SK-N-SH (cell line): ENCODE measurements at regions of chr15 and their contacts with region 1.

Region 1: DNA sequence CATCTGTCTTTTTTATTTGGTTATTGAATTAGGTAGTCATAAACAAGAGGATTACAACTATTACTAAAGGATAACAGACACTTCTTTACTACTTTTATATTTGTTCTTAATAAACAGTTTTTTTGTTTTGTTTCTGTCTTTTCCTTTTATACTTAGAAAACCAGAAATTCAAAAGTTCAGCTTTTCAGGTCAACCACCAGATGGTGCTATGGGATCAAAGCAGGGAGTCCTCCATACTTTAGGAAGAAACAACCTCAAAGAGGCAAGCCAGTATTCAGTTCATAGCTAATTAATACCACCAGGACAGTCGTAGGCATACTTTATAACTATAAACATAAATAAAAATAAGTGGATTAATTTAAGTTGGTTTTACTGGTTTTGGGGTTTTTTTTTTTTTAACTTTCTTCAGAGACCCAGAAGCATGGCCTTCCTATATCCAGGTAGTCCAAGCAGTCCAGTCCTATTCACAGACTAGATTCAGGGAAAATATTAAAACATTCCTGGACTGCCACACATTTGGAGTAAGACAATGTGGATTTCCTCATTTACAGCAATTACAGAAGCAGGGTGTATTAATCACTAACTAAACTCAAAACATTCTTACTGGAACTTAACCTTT is 16.0 kb upstream of the EID1 start:
- DNase-seq: peak; percentile 58
- H3K4me3 ChIP-seq: no peak overlapping the region
- H3K27ac ChIP-seq: no peak overlapping the region
- H3K4me1 ChIP-seq: peaks cover 1 to 31% of the 10 kb centered on the region in 2 experiments; a peak in 3 of 4 replicates
- H3K27me3 ChIP-seq: no peaks in the 10 kb centered on the region
- CTCF ChIP-seq: peak; percentile 98
- EP300 ChIP-seq: no peak
- RAD21 ChIP-seq: peak; percentile 99

Region 2: GRCh38 chr15:48358229-48358641 is 503.7 kb before region 1 on chr15:
- CTCF ChIA-PET with region 1: interaction called, 29 read pairs
- POLR2A ChIA-PET with region 1: no interaction called
- DNase-seq: peak; percentile 32
- H3K4me3 ChIP-seq: no peak overlapping the region
- H3K27ac ChIP-seq: peak overlapping the region; percentile 31 to 75; a peak in 3 of 4 replicates
- H3K4me1 ChIP-seq: peaks cover 0 to 14% of the 10 kb centered on the region in 2 experiments; a peak in 2 of 4 replicates
- H3K27me3 ChIP-seq: no peaks in the 10 kb centered on the region
- CTCF ChIP-seq: peak; percentile 82
- EP300 ChIP-seq: no peak
- RAD21 ChIP-seq: peak; percentile 87

Region 3: GRCh38 chr15:48682949-48683651 is 178.8 kb before region 1 on chr15:
- CTCF ChIA-PET with region 1: no interaction called
- POLR2A ChIA-PET with region 1: no interaction called
- DNase-seq: no peak
- H3K4me3 ChIP-seq: no peak overlapping the region
- H3K27ac ChIP-seq: no peak overlapping the region
- H3K4me1 ChIP-seq: peaks cover 0 to 9% of the 10 kb centered on the region in 2 experiments; a peak in 3 of 4 replicates
- H3K27me3 ChIP-seq: no peaks in the 10 kb centered on the region
- CTCF ChIP-seq: no peak
- EP300 ChIP-seq: no peak
- RAD21 ChIP-seq: no peak

Region 4: GRCh38 chr15:48963524-48964113 is 101.7 kb after region 1 on chr15 and contains the start of gene SHC4:
- CTCF ChIA-PET with region 1: interaction called, 14 read pairs
- POLR2A ChIA-PET with region 1: no interaction called
- DNase-seq: peak; percentile 84
- H3K4me3 ChIP-seq: peak within 1 kb of the TSS; percentile 76 to 78
- H3K27ac ChIP-seq: peak within 1 kb of the TSS; percentile 79 to 84
- H3K4me1 ChIP-seq: peaks cover 10 to 12% of the 10 kb centered on the region in 2 experiments; a peak in 2 of 4 replicates
- H3K27me3 ChIP-seq: no peaks in the 10 kb centered on the region
- CTCF ChIP-seq: peak; percentile 58
- EP300 ChIP-seq: no peak; a peak in 1 of 4 replicates
- RAD21 ChIP-seq: peak; percentile 27; the same call in 1 of the 2 replicates
- polyA plus RNA-seq, gene SHC4: 1.6 and 1.9 TPM in 2 replicates

Region 5: GRCh38 chr15:49046220-49047102 is 184.5 kb after region 1 on chr15 and contains the start of gene SECISBP2L:
- CTCF ChIA-PET with region 1: interaction called, 10 read pairs
- POLR2A ChIA-PET with region 1: no interaction called
- DNase-seq: peak; percentile 95
- H3K4me3 ChIP-seq: peak within 1 kb of the TSS; percentile 78 to 99
- H3K27ac ChIP-seq: peak within 1 kb of the TSS; percentile 75 to 82
- H3K4me1 ChIP-seq: peaks cover 7 to 9% of the 10 kb centered on the region in 2 experiments; a peak in 3 of 4 replicates
- H3K27me3 ChIP-seq: no peaks in the 10 kb centered on the region
- CTCF ChIP-seq: peak; percentile 47
- EP300 ChIP-seq: peak; percentile 52 to 70; a peak in 3 of 4 replicates
- RAD21 ChIP-seq: peak; percentile 42
- polyA plus RNA-seq, gene SECISBP2L: 6.0 and 7.7 TPM in 2 replicates

Region 6: DNA sequence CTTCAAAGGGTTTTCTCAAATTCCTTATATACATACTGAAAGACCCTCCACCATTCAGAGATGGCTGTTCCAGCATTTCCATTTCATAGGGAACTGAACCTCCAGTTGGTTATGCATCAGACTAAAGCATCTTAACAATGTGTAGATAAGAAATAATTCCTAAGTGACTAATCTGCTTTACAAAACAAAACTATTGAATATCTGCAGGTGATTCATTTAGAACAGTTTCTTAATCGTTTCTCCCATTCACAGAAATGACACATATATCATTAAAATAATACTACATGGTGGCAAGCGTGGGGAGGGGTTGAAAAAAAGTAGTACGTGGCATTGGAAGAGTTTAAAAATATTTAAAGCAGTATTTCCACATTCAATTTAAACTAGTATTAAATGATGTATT is 274.0 kb after region 1 on chr15:
- CTCF ChIA-PET with region 1: interaction called, 18 read pairs
- POLR2A ChIA-PET with region 1: no interaction called
- DNase-seq: no peak
- H3K4me3 ChIP-seq: no peak overlapping the region
- H3K27ac ChIP-seq: peak overlapping the region in 1 of 2 experiments; percentile 77; a peak in 2 of 4 replicates
- H3K4me1 ChIP-seq: peaks cover 0 to 40% of the 10 kb centered on the region in 2 experiments; a peak in 3 of 4 replicates
- H3K27me3 ChIP-seq: no peaks in the 10 kb centered on the region
- CTCF ChIP-seq: no peak
- EP300 ChIP-seq: peak in 1 of 2 experiments; percentile 53; a peak in 1 of 4 replicates
- RAD21 ChIP-seq: no peak

Region 7: DNA sequence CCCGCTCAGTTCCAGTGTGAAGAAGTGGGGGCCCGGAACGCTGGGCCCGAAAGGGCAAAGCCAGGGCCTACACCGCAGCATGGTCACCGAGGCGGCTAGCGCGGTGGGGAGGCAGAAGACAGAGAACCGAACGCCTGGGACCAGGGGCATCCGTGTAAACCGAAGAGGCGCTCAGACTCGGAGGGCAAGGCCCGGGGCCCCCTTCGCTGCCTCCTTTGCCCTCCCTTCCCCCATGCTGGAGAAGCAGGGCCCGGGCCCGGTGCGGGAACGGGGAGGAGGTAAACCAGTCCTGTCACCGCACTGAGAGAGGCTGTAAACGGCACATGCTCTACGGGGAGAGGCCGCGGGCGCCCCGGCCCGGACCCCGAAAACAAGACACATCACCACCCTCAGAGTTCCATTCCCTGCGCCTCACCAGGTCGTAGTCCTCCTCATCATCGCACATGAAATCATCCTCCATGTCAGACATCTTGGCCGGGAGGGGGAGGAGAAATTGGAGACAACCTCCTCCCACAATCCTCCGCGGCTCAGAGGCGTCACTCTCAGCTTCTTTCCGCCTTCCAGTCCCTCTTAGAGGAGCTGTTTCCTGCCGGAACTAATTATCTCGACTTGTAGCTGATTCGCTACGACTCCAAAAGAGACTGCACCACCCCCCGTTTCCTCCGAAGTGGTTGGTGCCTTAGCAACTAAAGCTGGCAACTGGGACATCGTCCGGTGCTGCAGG is 293.4 kb after region 1 on chr15 and contains the start of gene COPS2:
- CTCF ChIA-PET with region 1: interaction called, 12 read pairs
- POLR2A ChIA-PET with region 1: no interaction called
- DNase-seq: peak; percentile 85
- H3K4me3 ChIP-seq: peak within 1 kb of the TSS; percentile 96 to 97
- H3K27ac ChIP-seq: peak within 1 kb of the TSS; percentile 75 to 90
- H3K4me1 ChIP-seq: peaks cover 4 to 7% of the 10 kb centered on the region in 2 experiments; a peak in 2 of 4 replicates
- H3K27me3 ChIP-seq: no peaks in the 10 kb centered on the region
- CTCF ChIP-seq: no peak
- EP300 ChIP-seq: peak in 1 of 2 experiments; percentile 51; a peak in 1 of 4 replicates
- RAD21 ChIP-seq: no peak; the same call in 1 of the 2 replicates
- polyA plus RNA-seq, gene COPS2: 21.3 and 27.7 TPM in 2 replicates

Region 8: DNA sequence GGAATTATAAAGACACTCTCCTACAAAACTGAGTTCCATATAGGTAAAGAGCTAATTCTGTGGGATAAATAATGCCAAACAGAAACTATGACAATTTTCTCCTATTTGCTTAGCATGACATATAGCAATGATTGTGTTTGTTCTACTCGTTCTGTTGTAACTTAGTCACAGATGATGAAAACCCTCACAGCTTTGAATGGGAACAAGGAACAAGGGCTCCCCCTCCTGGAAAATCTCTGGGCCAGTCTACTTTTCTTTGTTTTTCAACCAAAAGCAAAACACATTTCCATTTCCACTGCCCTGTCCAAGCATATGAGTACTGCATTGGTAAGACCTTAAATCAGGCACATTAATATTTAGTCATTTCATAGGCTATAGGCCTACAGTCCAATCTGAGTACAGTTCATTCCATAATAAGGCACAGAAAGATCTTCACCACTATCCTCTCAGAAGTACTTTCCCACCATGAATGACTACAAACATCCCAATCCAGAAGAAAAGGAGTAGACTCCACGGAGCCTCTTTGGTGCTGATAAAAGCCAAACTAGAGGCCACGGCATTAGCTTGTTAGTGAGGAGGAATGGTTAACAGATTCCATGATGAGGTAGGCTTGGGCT is 1190.0 kb after region 1 on chr15:
- CTCF ChIA-PET with region 1: interaction called, 11 read pairs
- POLR2A ChIA-PET with region 1: no interaction called
- DNase-seq: peak; percentile 52
- H3K4me3 ChIP-seq: no peak overlapping the region; a peak in 1 of 4 replicates
- H3K27ac ChIP-seq: no peak overlapping the region
- H3K4me1 ChIP-seq: peaks cover 0 to 2% of the 10 kb centered on the region in 2 experiments; a peak in 1 of 4 replicates
- H3K27me3 ChIP-seq: no peaks in the 10 kb centered on the region
- CTCF ChIP-seq: peak; percentile 71
- EP300 ChIP-seq: no peak
- RAD21 ChIP-seq: peak; percentile 93